MCF 10A (cell line): ENCODE measurements at regions of chr12 and their contacts with region 1.

Region 1: DNA sequence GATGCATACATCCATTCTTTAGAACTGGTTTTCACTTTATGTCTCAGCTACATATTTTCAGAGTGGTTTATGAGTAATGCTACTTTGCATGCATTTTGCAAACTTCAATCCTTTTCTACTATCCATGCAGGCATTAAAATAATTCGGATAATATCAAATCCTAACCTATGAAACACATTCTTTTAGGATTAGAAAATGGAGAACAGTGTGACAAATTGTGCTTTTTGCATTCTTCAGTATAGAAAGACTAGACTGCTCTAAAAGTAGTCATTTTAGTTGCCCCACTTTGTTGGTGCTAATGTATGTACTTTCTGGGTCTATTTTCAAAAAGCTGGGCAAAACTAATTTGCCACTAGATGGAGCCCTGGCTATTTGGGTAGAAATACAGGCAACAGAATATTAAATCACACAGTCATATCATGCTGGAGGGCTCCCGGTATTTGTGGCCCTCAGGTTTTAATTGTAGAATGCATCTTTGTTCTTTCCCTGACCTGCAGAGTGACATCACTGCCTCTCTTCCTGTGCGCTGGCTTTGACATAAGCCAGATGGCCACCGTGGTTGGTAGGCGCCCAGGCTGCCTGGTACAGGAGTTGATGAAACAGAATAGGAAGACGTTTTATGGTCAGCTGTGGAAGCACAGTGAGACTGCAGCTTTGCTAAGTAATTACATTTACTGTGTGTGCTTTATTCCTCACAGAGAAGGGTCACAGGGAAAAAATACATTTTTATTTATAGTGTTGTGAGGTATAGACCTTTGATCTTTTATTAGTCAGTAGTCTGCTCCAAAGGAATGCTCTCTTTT is 28.1 kb downstream of the MSRB3 start:
- DNase-seq: peak; percentile 73
- H3K4me3 Mint-ChIP-seq: peak overlapping the region; percentile 29
- H3K27ac Mint-ChIP-seq: peak overlapping the region; percentile 59
- H3K4me1 Mint-ChIP-seq: peaks cover 26% of the 10 kb centered on the region
- H3K27me3 Mint-ChIP-seq: no peaks in the 10 kb centered on the region
- CTCF ChIP-seq: peak; percentile 75

Region 2: GRCh38 chr12:65086236-65086635 is 220.3 kb before region 1 on chr12:
- CTCF ChIA-PET with region 1: no interaction called
- POLR2A ChIA-PET with region 1: no interaction called
- intact Hi-C with region 1: no loop called
- DNase-seq: no peak
- H3K4me3 Mint-ChIP-seq: no peak overlapping the region
- H3K27ac Mint-ChIP-seq: no peak overlapping the region
- H3K4me1 Mint-ChIP-seq: no peaks in the 10 kb centered on the region
- H3K27me3 Mint-ChIP-seq: peaks cover 52% of the 10 kb centered on the region
- CTCF ChIP-seq: no peak

Region 3: GRCh38 chr12:65259501-65259900 is 47.1 kb before region 1 on chr12:
- CTCF ChIA-PET with region 1: no interaction called
- POLR2A ChIA-PET with region 1: no interaction called
- intact Hi-C with region 1: no loop called
- DNase-seq: no peak
- H3K4me3 Mint-ChIP-seq: no peak overlapping the region
- H3K27ac Mint-ChIP-seq: no peak overlapping the region
- H3K4me1 Mint-ChIP-seq: no peaks in the 10 kb centered on the region
- H3K27me3 Mint-ChIP-seq: no peaks in the 10 kb centered on the region
- CTCF ChIP-seq: no peak

Region 4: GRCh38 chr12:65287426-65287825 is 19.1 kb before region 1 on chr12:
- CTCF ChIA-PET with region 1: interaction called, 10 read pairs
- POLR2A ChIA-PET with region 1: interaction called, 3 read pairs
- intact Hi-C with region 1: no loop called
- DNase-seq: no peak
- H3K4me3 Mint-ChIP-seq: no peak overlapping the region
- H3K27ac Mint-ChIP-seq: no peak overlapping the region
- H3K4me1 Mint-ChIP-seq: no peaks in the 10 kb centered on the region
- H3K27me3 Mint-ChIP-seq: no peaks in the 10 kb centered on the region
- CTCF ChIP-seq: no peak

Region 5: DNA sequence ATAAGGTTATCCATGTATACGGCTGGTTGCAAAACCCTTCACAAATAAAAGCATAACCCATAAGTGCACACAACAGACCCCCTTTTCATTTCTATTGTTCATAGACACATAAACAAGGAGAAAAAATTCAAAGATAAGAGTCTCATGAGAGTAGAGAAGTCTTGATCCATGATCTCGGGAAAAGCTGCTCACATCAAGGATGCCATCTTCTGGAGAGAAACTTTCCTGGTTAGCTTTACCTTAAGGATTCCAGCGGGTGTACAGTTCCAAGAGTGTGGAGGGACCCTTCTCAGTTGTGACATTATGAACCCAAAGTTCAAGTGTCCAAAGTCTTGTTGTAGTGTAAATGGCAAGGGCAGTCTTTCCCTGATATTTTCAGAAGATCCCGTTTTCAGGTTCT is 679.5 kb after region 1 on chr12:
- CTCF ChIA-PET with region 1: interaction called, 3 read pairs
- POLR2A ChIA-PET with region 1: no interaction called
- intact Hi-C with region 1: loop called (anchors 2 kb)
- DNase-seq: no peak
- H3K4me3 Mint-ChIP-seq: no peak overlapping the region
- H3K27ac Mint-ChIP-seq: no peak overlapping the region
- H3K4me1 Mint-ChIP-seq: peaks cover 5% of the 10 kb centered on the region
- H3K27me3 Mint-ChIP-seq: no peaks in the 10 kb centered on the region
- CTCF ChIP-seq: no peak

Region 6: GRCh38 chr12:66087365-66087943 is 780.9 kb after region 1 on chr12:
- CTCF ChIA-PET with region 1: interaction called, 14 read pairs
- POLR2A ChIA-PET with region 1: no interaction called
- intact Hi-C with region 1: loop called (anchors 2 kb)
- DNase-seq: peak; percentile 79
- H3K4me3 Mint-ChIP-seq: no peak overlapping the region
- H3K27ac Mint-ChIP-seq: no peak overlapping the region
- H3K4me1 Mint-ChIP-seq: peaks cover under 1% of the 10 kb centered on the region
- H3K27me3 Mint-ChIP-seq: no peaks in the 10 kb centered on the region
- CTCF ChIP-seq: peak; percentile 72

Region 7: DNA sequence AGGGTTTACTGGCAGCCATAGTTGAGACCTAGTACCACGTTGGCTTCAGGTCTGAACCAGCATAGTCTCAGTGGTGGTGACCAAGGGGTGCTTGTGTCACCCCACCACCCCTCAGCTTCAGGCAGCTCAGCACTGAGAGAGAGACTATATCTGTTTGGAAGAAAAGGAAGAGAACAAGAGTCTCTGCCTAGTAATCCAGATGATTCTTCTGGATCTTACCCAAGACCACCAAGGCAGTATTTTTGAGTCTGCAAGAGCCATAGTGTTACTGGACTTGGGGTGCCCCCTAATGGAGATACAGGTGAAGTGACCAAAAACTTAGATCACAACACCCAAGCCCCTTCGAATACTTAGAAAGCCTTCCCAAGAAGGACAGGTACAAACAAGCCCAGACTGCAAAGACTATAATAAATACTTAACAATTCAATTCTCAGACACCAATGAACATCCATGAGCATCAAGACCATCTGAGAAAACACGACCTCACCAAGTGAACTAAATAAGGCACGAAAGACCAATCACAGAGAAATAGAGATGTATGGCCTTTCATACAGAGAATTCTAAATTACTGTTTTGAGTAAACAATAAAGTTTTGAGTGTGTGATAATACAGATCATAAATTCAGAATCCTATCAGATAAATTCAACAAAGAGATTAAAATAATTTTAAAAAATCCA is 1102.8 kb after region 1 on chr12:
- CTCF ChIA-PET with region 1: interaction called, 3 read pairs
- POLR2A ChIA-PET with region 1: no interaction called
- intact Hi-C with region 1: loop called (anchors 10 kb)
- DNase-seq: peak; percentile 53
- H3K4me3 Mint-ChIP-seq: no peak overlapping the region
- H3K27ac Mint-ChIP-seq: no peak overlapping the region
- H3K4me1 Mint-ChIP-seq: peaks cover 6% of the 10 kb centered on the region
- H3K27me3 Mint-ChIP-seq: no peaks in the 10 kb centered on the region
- CTCF ChIP-seq: peak; percentile 75